ENCODE measurements at regions of chr15 and their contacts with region 1.

Region 1: GRCh38 chr15:74460871-74461846 is at the start of gene UBL7:
- DNase-seq: peak; percentile 91 to 99 (median 92)
- ATAC-seq: peak; percentile 90
- H3K4me3 ChIP-seq: peak within 1 kb of the TSS; percentile 73
- H3K27ac ChIP-seq: peak within 1 kb of the TSS; percentile 91
- H3K4me1 ChIP-seq: peaks cover 16 to 18% of the 10 kb centered on the region in 2 experiments; a peak in 4 of 5 replicates
- H3K27me3 ChIP-seq: no peaks in the 10 kb centered on the region
- CTCF ChIP-seq: peak; percentile 36 to 50 (median 46); a peak in 4 of 6 replicates
- EP300 ChIP-seq: peak; percentile 55
- POLR2A ChIP-seq: peak; percentile 94
- RAD21 ChIP-seq: peak in 1 of 2 experiments; percentile 53; a peak in 2 of 4 replicates
- polyA plus RNA-seq, gene UBL7: 19.2 to 44.9 TPM

Region 2: GRCh38 chr15:74482661-74483060 is 21.5 kb after region 1 on chr15:
- CTCF ChIA-PET with region 1: no interaction called
- POLR2A ChIA-PET with region 1: interaction called, 7 read pairs
- in situ Hi-C with region 1: no loop called
- intact Hi-C with region 1: loop called (anchors 2 kb)
- DNase-seq: peak in 3 of 4 experiments; percentile 24 to 32 (median 26)
- ATAC-seq: peak; percentile 91
- H3K4me3 ChIP-seq: no peak overlapping the region
- H3K27ac ChIP-seq: no peak overlapping the region
- H3K4me1 ChIP-seq: no peaks in the 10 kb centered on the region; a peak in 1 of 5 replicates
- H3K27me3 ChIP-seq: no peaks in the 10 kb centered on the region
- CTCF ChIP-seq: peak; percentile 28 to 49 (median 37); a peak in 4 of 6 replicates
- EP300 ChIP-seq: no peak
- POLR2A ChIP-seq: no peak
- RAD21 ChIP-seq: peak in 1 of 2 experiments; percentile 34; a peak in 2 of 4 replicates

Region 3: GRCh38 chr15:74540761-74541493 is 79.8 kb after region 1 on chr15 and contains the start of gene ARID3B:
- CTCF ChIA-PET with region 1: no interaction called
- POLR2A ChIA-PET with region 1: interaction called, 6 read pairs
- in situ Hi-C with region 1: no loop called
- intact Hi-C with region 1: loop called (anchors 5 kb)
- DNase-seq: peak; percentile 95 to 98 (median 96)
- ATAC-seq: peak; percentile 96
- H3K4me3 ChIP-seq: peak within 1 kb of the TSS; percentile 92
- H3K27ac ChIP-seq: peak within 1 kb of the TSS; percentile 100
- H3K4me1 ChIP-seq: peaks cover 20 to 26% of the 10 kb centered on the region in 2 experiments
- H3K27me3 ChIP-seq: no peaks in the 10 kb centered on the region
- CTCF ChIP-seq: no peak
- EP300 ChIP-seq: 0 out of 2 replicates have a peak, but pooled peaks have one; percentile 12
- POLR2A ChIP-seq: peak; percentile 98
- RAD21 ChIP-seq: no peak
- polyA plus RNA-seq, gene ARID3B: 0.32 to 0.74 TPM

Measured in K562 (cell line).